Aorta (tissue), 5 donors: ENCODE measurements at regions of chr3 and their contacts with region 1.

Region 1: GRCh38 chr3:145942052-145942451 is 218.9 kb downstream of the PLOD2 start:
- DNase-seq: no peak
- ATAC-seq: no peak
- H3K4me3 ChIP-seq: no peak overlapping the region
- H3K27ac ChIP-seq: no peak overlapping the region
- H3K4me1 ChIP-seq: no peaks in the 10 kb centered on the region
- H3K27me3 ChIP-seq: no peaks in the 10 kb centered on the region

Region 2: DNA sequence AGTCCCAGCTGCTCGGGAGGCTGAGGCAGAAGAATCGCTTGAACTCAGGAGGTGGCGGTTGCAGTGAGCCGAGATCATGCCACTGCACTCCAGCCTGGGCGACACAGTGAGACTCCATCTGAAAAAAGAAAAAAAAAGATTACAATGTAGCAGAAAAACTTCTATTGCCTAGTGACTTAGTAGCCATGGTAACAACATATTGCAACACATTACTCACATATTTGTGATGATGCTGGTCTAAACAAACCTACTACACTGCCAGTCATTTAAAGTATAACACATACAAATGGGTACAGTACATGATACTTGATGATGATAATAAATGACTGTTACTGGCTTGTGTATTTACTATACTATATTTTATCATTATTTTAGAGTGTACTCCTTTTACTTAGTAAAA is 93.3 kb after region 1 on chr3:
- intact Hi-C with region 1: loop called in 1 of 2 experiments (anchors 10 kb)
- DNase-seq: no peak
- ATAC-seq: no peak
- H3K4me3 ChIP-seq: no peak overlapping the region
- H3K27ac ChIP-seq: no peak overlapping the region
- H3K4me1 ChIP-seq: no peaks in the 10 kb centered on the region
- H3K27me3 ChIP-seq: no peaks in the 10 kb centered on the region